ENCODE measurements at regions of chr7 and their contacts with region 1.

Region 1: DNA sequence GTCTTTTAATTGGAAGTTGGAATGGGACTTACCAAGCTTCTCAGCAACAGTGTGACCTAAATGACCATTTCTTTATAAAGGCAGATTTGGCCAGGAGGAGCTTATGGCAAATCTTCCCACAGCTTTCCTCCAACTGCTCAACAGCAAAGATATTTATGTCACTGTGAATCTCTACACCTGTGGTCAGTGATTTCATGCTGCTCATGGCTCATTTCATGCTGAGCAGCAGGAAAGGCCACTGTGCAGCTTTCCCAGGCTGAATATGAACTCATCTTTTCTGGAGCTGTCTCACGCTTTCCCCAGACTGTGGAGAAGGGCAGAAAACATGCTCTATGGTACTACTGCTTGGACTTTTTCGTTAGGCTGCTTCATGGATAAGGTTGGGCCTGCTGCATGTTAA is 29.8 kb downstream of the CALCR start:
- DNase-seq: peak; percentile 11
- H3K4me3 ChIP-seq: no peak overlapping the region
- H3K27ac ChIP-seq: no peak overlapping the region
- H3K4me1 ChIP-seq: no peaks in the 10 kb centered on the region
- H3K27me3 ChIP-seq: no peaks in the 10 kb centered on the region

Region 2: DNA sequence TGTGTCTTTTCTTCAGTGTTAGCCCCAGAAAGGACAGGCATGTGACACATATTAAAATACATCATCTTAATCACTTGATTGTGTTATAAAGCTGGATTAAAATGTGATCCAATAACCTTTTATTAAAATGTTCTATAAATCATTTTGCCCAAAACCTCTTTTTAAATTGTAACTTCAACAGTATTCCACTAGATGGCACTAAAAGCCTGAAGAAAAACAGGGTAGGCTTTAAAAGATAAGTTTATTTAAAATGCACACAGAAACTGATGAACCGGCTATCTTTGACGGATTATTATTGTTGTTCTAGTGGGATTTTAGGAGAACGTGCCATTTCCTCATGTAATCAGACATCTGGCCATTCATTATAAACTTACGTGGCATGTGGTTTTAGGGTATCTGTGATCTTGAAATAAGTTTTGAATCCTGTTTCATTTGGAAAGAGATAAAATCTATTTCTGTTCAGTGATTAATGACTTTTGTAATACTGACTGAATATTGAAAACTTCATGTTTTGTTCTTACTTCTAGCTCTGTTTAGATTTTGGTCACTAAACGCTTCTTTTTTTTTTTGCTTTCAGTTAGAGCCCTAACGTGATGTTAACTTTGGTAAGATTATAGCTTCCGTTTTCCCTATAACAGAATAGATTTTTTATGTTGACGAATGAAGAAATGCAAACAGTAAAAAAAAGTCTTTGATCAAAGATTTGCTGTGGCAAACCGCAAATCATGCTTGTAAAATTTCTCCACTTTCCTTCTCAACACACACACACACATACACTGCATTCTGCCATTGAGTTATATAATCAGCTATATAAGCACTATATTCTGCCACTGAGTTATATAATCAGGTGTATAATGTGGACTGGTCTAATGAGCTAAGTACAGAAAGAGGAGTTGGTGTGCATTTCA is 298.9 kb before region 1 on chr7:
- in situ Hi-C with region 1: loop called (anchors 10 kb)
- DNase-seq: peak; percentile 50
- H3K4me3 ChIP-seq: peak overlapping the region; percentile 55
- H3K27ac ChIP-seq: no peak overlapping the region
- H3K4me1 ChIP-seq: peaks cover 10% of the 10 kb centered on the region; the same call in 1 of the 2 replicates
- H3K27me3 ChIP-seq: no peaks in the 10 kb centered on the region